Heart left ventricle (tissue), 16 donors: ENCODE measurements at regions of chr1 and their contacts with region 1.

Region 1: GRCh38 chr1:33367485-33368405 is 46.8 kb upstream of the A3GALT2 start:
- DNase-seq: peak; percentile 88 to 93 (median 88)
- ATAC-seq: peak; percentile 45 to 76 (median 68)
- H3K4me3 ChIP-seq: no peak overlapping the region
- H3K27ac ChIP-seq: peak overlapping the region in 11 of 12 donors; percentile 66 to 92 (median 81)
- H3K4me1 ChIP-seq: peaks cover 17 to 70% (median 54%) of the 10 kb centered on the region in 12 donors
- H3K27me3 ChIP-seq: no peaks in the 10 kb centered on the region
- CTCF ChIP-seq: peak; percentile 94 to 99 (median 96)
- POLR2A ChIP-seq: no peak

Region 2: DNA sequence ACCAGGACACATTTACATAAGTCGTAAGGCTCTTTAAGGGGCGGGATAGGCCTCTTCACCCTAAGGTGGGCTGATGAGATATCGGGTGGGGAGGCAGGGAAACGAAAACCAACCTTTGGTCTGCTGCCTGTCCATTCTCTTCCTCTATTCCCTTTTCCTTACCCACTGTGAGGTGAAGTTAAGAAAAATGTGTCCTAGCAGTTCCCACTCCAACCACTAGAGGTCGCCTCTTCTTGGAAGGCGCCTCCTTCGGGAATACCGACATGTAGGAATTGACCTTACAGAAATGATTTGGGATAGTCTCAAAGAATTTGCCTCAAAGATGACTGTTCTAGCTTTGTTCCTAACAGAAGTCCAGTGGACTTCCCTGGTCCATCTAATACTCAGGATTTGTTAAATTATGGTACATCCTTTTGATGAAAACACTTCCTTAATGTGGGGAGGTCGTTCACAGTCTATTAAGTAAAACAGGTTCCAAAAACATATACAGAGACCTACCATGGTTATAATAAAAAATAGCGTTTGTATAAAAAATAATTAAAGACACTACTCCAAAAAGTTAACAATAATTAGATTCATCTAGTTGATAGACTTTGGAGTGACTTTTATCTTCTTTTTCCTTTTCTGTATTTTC is 272.7 kb before region 1 on chr1:
- intact Hi-C with region 1: loop called in 2 of 10 experiments (anchors 5 to 10 kb)
- DNase-seq: peak in 2 of 5 donors; percentile 43 to 45
- ATAC-seq: peak in 1 of 4 donors; percentile 34
- H3K4me3 ChIP-seq: no peak overlapping the region
- H3K27ac ChIP-seq: no peak overlapping the region
- H3K4me1 ChIP-seq: peaks cover 0 to 45% (median 6%) of the 10 kb centered on the region in 12 donors
- H3K27me3 ChIP-seq: no peaks in the 10 kb centered on the region
- CTCF ChIP-seq: peak; percentile 93 to 99 (median 98)
- POLR2A ChIP-seq: no peak

Region 3: GRCh38 chr1:33152685-33153432 is 214.9 kb before region 1 on chr1:
- intact Hi-C with region 1: loop called in 1 of 10 experiments (anchors 10 kb)
- DNase-seq: peak; percentile 89 to 94 (median 90)
- ATAC-seq: peak; percentile 91 to 97 (median 94)
- H3K4me3 ChIP-seq: no peak overlapping the region
- H3K27ac ChIP-seq: peak overlapping the region in 11 of 12 donors; percentile 37 to 85 (median 77)
- H3K4me1 ChIP-seq: peaks cover 12 to 48% (median 35%) of the 10 kb centered on the region in 12 donors
- H3K27me3 ChIP-seq: no peaks in the 10 kb centered on the region
- CTCF ChIP-seq: no peak
- POLR2A ChIP-seq: no peak

Region 4: DNA sequence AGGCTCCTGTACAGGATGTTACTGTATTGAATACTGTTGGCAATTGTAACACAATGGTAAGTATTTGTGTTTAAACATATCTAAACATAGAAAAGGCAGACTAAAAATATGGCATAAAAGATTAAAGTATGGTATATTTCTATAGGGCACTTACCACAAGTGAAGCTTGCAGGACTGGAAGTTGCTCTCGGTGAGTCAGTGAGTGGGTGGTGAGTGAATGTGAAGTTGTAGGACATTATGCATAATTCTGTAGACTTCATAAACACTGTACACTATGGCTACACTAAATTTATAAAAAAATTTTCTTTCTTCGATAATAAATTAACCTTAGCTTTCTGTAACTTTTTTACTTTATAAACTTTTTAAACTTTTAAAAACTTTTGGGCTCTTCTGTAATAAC is 172.2 kb before region 1 on chr1:
- intact Hi-C with region 1: no loop called
- DNase-seq: no peak
- ATAC-seq: no peak
- H3K4me3 ChIP-seq: no peak overlapping the region
- H3K27ac ChIP-seq: no peak overlapping the region
- H3K4me1 ChIP-seq: no peaks in the 10 kb centered on the region
- H3K27me3 ChIP-seq: peaks cover 0 to 6% (median 0%) of the 10 kb centered on the region in 9 donors
- CTCF ChIP-seq: no peak
- POLR2A ChIP-seq: no peak

Region 5: DNA sequence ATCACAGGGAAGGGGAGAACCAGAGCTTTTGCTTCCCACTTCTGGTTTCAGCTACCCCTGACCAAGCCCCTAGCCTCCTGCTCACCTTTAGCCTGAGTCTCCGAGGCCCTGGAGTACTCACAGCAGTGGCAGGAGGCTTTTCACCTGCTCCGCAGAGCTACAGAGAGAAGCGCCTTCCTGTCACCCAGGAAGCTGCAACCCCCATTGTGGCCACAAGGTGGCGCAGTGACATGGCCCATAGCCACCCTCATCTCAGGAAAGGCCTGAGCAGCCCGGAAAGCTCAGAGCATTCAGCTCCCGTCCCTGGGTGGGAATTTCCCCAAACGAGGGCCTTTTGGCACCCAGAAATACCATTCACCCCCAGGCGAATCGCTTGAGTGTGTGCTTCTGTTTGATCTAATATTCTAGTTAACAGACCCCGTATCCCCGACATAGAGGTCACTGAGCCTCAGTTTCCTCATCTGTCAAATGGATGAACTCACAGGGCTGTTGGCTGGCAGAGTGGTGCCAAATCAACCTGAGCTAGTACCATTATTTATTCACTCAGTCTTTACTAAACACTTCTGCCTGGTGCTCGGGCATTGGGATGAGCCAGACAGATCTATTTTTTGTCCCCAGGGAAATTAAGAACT is 72.2 kb before region 1 on chr1:
- intact Hi-C with region 1: loop called (anchors 1 to 2 kb)
- DNase-seq: peak; percentile 78 to 92 (median 84)
- ATAC-seq: peak; percentile 72 to 88 (median 80)
- H3K4me3 ChIP-seq: no peak overlapping the region
- H3K27ac ChIP-seq: peak overlapping the region in 5 of 12 donors; percentile 6 to 46 (median 23)
- H3K4me1 ChIP-seq: peaks cover 0 to 25% (median 11%) of the 10 kb centered on the region in 12 donors
- H3K27me3 ChIP-seq: no peaks in the 10 kb centered on the region
- CTCF ChIP-seq: peak in 11 of 12 donors; percentile 90 to 100 (median 97)
- POLR2A ChIP-seq: no peak

Region 6: GRCh38 chr1:33455539-33456501 is 88.1 kb after region 1 on chr1:
- intact Hi-C with region 1: loop called in 7 of 10 experiments (anchors 5 kb)
- DNase-seq: peak in 4 of 5 donors; percentile 51 to 64 (median 58)
- ATAC-seq: peak; percentile 68 to 89 (median 87)
- H3K4me3 ChIP-seq: no peak overlapping the region
- H3K27ac ChIP-seq: peak overlapping the region in 10 of 12 donors; percentile 11 to 66 (median 43)
- H3K4me1 ChIP-seq: peaks cover 0 to 47% (median 19%) of the 10 kb centered on the region in 12 donors
- H3K27me3 ChIP-seq: no peaks in the 10 kb centered on the region
- CTCF ChIP-seq: peak; percentile 43 to 69 (median 54)
- POLR2A ChIP-seq: no peak

Region 7: GRCh38 chr1:33472349-33472980 is 104.7 kb after region 1 on chr1 and contains the start of gene ZSCAN20:
- intact Hi-C with region 1: loop called in 4 of 10 experiments (anchors 5 kb)
- DNase-seq: peak; percentile 98 to 99 (median 98)
- ATAC-seq: peak; percentile 90 to 94 (median 94)
- H3K4me3 ChIP-seq: peak within 1 kb of the TSS; percentile 42 to 74 (median 67)
- H3K27ac ChIP-seq: peak within 1 kb of the TSS; percentile 76 to 90 (median 86)
- H3K4me1 ChIP-seq: peaks cover 3 to 50% (median 34%) of the 10 kb centered on the region in 12 donors
- H3K27me3 ChIP-seq: no peaks in the 10 kb centered on the region
- CTCF ChIP-seq: no peak
- POLR2A ChIP-seq: peak in 1 of 2 donors; percentile 48
- total RNA-seq, gene ZSCAN20: 3.3 to 8.8 (median 6.4) TPM